ENCODE measurements at regions of chr6 and their contacts with region 1.

Region 1: GRCh38 chr6:3013479-3013878 is 13.8 kb downstream of the NQO2 start:
- DNase-seq: peak; percentile 47
- ATAC-seq: peak; percentile 72
- H3K4me3 ChIP-seq: no peak overlapping the region
- H3K27ac ChIP-seq: no peak overlapping the region
- H3K4me1 ChIP-seq: 0 out of 2 replicates have a peak, but pooled peaks cover 3% of the 10 kb centered on the region
- H3K27me3 ChIP-seq: no peaks in the 10 kb centered on the region
- CTCF ChIP-seq: no peak
- POLR2A ChIP-seq: no peak
- RAD21 ChIP-seq: no peak

Region 2: GRCh38 chr6:3045369-3045768 is 31.9 kb after region 1 on chr6:
- CTCF ChIA-PET with region 1: no interaction called
- POLR2A ChIA-PET with region 1: no interaction called
- dilution Hi-C with region 1: no loop called
- in situ Hi-C with region 1: loop called (anchors 5 kb)
- intact Hi-C with region 1: no loop called
- DNase-seq: no peak
- ATAC-seq: no peak
- H3K4me3 ChIP-seq: no peak overlapping the region
- H3K27ac ChIP-seq: no peak overlapping the region
- H3K4me1 ChIP-seq: peaks cover 2% of the 10 kb centered on the region; the same call in 1 of the 2 replicates
- H3K27me3 ChIP-seq: peaks cover 16% of the 10 kb centered on the region
- CTCF ChIP-seq: no peak
- POLR2A ChIP-seq: no peak
- RAD21 ChIP-seq: no peak